Endothelial cell of umbilical vein (primary cell): ENCODE measurements at regions of chr5 and their contacts with region 1.

Region 1: GRCh38 chr5:172868924-172869591 is 35.0 kb downstream of the ERGIC1 start:
- DNase-seq: peak; percentile 92
- H3K4me3 ChIP-seq: no peak overlapping the region
- H3K27ac ChIP-seq: peak overlapping the region; percentile 94
- H3K4me1 ChIP-seq: peaks cover 62% of the 10 kb centered on the region
- H3K27me3 ChIP-seq: no peaks in the 10 kb centered on the region
- CTCF ChIP-seq: peak; percentile 38 to 60
- POLR2A ChIP-seq: peak; percentile 51

Region 2: DNA sequence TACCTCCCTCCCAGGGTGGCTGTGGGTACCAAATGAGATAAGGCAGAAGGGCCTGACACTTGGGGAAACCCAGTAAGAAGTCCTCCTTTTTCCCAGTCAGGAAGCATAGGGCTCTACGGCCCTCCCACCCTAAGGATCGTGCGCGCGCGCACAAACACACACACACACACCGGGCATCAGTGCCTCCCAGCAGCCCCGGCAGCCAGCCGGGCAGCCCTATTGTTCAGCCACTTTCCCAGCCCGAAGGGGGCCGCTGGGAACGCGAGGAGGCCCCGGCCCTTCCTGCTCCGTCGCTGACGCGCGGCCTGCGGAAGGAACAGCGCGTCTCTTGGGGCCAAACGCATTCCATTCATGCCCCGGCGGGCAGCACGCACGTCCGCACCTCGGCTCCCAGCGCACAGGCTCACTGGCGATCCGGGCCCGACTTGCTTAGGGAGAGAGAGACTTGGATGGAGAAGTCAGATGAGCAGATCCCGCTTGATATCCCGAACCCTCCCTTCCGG is 120.7 kb before region 1 on chr5:
- CTCF ChIA-PET with region 1: no interaction called
- POLR2A ChIA-PET with region 1: interaction called, 3 read pairs
- dilution Hi-C with region 1: no loop called
- intact Hi-C with region 1: loop called (anchors 1 kb)
- DNase-seq: peak; percentile 96
- H3K4me3 ChIP-seq: no peak overlapping the region
- H3K27ac ChIP-seq: peak overlapping the region; percentile 79
- H3K4me1 ChIP-seq: peaks cover 13% of the 10 kb centered on the region
- H3K27me3 ChIP-seq: no peaks in the 10 kb centered on the region
- CTCF ChIP-seq: no peak
- POLR2A ChIP-seq: peak; percentile 52

Region 3: DNA sequence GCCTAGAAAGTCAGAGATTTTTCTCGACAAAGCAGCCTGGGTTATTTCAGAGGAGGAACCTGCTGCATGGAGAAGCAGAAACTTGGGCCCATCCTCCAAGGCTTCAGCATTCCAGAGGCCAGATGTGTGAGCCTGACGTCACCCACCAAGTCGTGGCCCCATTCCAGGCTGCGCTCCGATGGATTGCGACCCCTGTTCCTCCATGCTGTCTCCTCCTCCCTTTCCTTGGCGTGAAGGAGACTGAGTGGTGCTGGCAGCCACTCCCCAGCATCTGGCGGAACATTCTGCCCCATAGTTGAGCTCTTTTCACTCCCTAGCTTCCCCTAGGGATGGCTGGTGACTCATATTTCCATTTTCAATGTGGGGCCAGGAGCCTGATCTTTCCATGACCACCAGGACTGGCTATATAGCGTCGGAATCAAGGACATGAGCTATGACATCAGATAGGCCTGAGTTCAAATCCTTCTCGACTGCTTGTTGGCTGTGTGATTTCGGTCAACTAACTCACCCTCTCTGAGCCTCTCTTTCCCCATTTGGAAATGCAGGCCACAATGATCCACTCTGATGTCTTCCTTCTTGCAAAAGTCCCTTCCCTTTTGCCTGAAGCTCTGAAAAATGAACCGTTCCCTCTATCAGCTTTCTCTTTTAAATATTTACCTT is 73.6 kb before region 1 on chr5:
- CTCF ChIA-PET with region 1: interaction called, 7 read pairs
- POLR2A ChIA-PET with region 1: no interaction called
- dilution Hi-C with region 1: no loop called
- intact Hi-C with region 1: loop called (anchors 2 kb)
- DNase-seq: peak; percentile 96
- H3K4me3 ChIP-seq: no peak overlapping the region
- H3K27ac ChIP-seq: peak overlapping the region; percentile 76
- H3K4me1 ChIP-seq: peaks cover 48% of the 10 kb centered on the region
- H3K27me3 ChIP-seq: no peaks in the 10 kb centered on the region
- CTCF ChIP-seq: no peak
- POLR2A ChIP-seq: no peak

Region 4: DNA sequence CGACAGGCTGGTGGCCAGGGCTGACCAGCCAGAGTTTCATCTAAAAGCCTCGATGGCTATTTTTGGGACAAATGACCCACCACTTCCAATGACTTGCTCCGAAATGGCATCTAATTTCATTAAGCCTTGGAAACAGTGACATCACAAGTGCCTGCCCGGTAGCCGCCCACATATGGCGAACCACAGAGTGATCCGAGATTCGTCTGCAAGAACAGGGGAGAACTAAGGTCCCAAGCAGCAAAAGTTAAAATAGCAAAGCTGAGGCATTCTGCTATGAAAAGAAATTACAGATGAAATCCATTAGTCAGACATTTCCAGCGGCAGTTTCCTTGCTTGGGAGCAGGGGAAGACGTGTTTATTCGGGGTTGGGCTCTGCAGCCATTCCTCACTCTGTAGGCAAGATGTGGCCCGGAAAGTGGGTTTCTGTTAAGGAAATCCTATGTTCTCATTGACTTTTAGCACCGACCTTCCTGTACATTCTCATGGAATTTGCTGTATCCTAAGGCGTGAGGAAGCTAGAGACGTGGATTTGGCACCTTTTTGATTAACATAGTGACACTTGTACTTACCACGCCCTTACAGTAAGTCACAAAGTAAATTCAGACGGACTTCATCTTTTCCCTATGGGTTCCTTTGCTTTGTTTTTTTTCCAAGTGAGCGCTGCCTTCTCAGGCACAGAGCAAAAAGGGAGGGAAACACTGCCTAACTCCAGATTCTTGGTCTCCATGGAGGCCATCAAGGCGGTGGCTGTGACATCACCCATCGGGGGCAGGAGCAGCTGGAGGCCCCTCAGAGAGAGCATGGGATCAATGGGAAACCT is 10.1 kb after region 1 on chr5:
- CTCF ChIA-PET with region 1: interaction called, 8 read pairs
- POLR2A ChIA-PET with region 1: interaction called, 3 read pairs
- dilution Hi-C with region 1: no loop called
- intact Hi-C with region 1: loop called (anchors 1 kb)
- DNase-seq: peak; percentile 92
- H3K4me3 ChIP-seq: peak overlapping the region in 1 of 3 experiments; percentile 27
- H3K27ac ChIP-seq: peak overlapping the region; percentile 96
- H3K4me1 ChIP-seq: peaks cover 45% of the 10 kb centered on the region
- H3K27me3 ChIP-seq: no peaks in the 10 kb centered on the region
- CTCF ChIP-seq: no peak
- POLR2A ChIP-seq: peak; percentile 66

Region 5: DNA sequence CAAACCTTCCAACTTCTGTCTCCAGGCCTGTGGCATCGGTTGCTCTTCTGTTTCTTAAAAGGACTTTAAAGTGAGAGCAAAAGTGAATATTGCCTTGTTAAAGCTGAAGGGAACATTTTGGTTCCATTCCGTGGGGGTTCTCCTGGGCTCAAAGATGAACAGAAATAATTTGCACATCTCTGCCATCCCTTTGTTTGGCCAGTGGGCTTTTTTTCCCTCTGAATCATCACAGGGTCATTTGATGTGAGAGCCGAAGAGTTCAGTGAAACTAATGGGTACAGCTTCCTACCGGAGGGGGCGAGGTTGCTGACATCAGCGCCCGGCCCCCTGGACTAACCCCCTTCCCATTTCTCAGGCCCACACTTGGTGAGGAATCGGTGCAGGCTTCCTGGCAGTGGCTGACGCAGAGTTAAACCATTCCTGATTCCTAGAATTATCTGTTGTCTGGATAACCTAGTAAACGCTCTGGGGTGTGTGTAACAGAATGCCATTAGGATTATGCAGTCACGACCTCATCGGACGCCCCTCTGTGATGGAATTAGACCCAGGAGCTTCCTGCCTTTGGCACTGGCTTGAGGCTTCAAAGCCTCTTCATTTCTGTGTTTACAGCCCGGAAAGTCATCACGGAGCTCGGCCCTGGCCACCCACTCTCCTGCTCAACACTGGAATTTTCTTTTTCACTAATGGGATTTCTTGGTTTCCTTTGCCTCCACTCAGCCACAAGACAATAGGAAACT is 28.6 kb after region 1 on chr5:
- CTCF ChIA-PET with region 1: interaction called, 28 read pairs
- POLR2A ChIA-PET with region 1: interaction called, 6 read pairs
- dilution Hi-C with region 1: no loop called
- intact Hi-C with region 1: loop called (anchors 1 kb)
- DNase-seq: peak; percentile 91
- H3K4me3 ChIP-seq: no peak overlapping the region
- H3K27ac ChIP-seq: peak overlapping the region; percentile 87
- H3K4me1 ChIP-seq: peaks cover 41% of the 10 kb centered on the region
- H3K27me3 ChIP-seq: no peaks in the 10 kb centered on the region
- CTCF ChIP-seq: no peak
- POLR2A ChIP-seq: peak; percentile 52

Region 6: GRCh38 chr5:172932313-172933017 is 63.4 kb after region 1 on chr5:
- CTCF ChIA-PET with region 1: interaction called, 17 read pairs
- POLR2A ChIA-PET with region 1: no interaction called
- dilution Hi-C with region 1: no loop called
- intact Hi-C with region 1: loop called (anchors 1 kb)
- DNase-seq: peak; percentile 65
- H3K4me3 ChIP-seq: no peak overlapping the region
- H3K27ac ChIP-seq: peak overlapping the region; percentile 74
- H3K4me1 ChIP-seq: peaks cover 31% of the 10 kb centered on the region
- H3K27me3 ChIP-seq: no peaks in the 10 kb centered on the region
- CTCF ChIP-seq: peak; percentile 96 to 97
- POLR2A ChIP-seq: no peak

Region 7: DNA sequence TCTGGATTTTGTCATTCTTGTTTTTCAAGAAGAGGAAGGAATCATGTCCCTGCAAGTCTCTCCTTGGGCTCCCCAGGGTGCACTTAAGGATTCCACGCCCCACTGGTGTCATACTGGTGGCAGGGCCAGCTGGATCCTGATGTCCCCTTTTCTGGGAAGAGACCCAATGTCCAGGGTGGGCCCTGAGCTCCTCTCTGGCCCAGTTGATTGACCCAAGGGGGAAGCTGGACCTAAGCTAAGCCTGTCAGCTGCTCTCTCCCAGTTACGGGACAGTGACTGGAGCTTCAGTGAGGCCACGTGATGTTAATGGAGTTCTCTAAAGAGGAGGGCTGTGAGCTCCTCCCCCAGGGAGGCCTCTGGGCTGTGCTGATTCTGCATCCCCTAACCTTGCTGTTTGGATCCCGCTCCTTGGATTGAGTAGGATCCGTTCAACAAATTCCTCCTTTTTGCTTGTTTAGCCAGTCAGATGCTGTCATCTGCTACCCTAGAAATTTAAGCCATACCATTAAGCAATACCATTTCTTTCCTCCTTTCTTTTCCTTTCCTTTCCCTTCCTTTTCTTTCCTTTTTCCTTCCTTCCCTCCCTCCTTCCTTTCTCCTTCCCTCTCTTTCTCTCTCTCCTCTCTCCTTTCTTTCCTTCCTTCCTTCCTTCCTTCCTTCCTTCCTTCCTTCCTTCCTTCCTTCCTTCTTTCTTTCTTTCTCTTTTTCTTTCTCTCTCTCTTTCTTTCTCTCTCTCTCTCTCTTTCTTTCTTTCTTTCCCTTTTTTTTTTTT is 348.8 kb after region 1 on chr5:
- CTCF ChIA-PET with region 1: no interaction called
- POLR2A ChIA-PET with region 1: no interaction called
- dilution Hi-C with region 1: no loop called
- intact Hi-C with region 1: no loop called
- DNase-seq: no peak
- H3K4me3 ChIP-seq: no peak overlapping the region
- H3K27ac ChIP-seq: no peak overlapping the region
- H3K4me1 ChIP-seq: no peaks in the 10 kb centered on the region
- H3K27me3 ChIP-seq: peaks cover 3 to 4% of the 10 kb centered on the region in 2 experiments
- CTCF ChIP-seq: no peak
- POLR2A ChIP-seq: no peak